ENCODE measurements at regions of chr1 and their contacts with region 1.

Region 1: DNA sequence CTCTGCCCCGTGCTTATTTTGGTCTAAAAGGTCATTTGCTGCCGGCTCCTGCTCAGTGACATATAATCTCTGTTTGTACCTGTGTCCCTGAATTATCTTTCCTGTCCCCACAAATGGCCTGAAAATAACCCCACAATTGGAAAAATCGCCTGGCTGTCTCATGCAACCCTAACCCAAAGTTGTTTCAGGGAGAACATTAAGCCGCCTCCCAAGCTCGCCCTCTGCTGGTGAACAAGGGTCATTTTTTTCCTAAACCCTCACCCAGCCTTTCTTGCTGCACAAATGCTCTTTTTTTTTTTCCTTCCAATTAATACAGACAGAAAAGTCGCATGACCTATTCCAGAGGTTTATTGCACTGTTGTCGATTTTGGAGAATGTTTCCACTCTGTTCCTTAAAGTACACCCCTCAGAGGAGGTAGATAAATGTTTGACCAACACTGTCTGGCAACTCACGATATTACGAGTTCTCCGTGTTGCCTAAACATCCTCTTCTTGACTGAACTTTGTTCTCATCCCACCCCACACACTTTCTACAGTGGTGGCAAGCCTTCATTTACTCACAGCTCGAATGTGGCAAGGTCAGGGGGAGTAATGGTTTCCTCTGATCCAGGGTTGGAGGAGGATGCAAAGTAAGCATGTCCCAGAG is 148.7 kb downstream of the ZZZ3 start:
- DNase-seq: peak; percentile 68
- ATAC-seq: peak; percentile 56

Region 2: DNA sequence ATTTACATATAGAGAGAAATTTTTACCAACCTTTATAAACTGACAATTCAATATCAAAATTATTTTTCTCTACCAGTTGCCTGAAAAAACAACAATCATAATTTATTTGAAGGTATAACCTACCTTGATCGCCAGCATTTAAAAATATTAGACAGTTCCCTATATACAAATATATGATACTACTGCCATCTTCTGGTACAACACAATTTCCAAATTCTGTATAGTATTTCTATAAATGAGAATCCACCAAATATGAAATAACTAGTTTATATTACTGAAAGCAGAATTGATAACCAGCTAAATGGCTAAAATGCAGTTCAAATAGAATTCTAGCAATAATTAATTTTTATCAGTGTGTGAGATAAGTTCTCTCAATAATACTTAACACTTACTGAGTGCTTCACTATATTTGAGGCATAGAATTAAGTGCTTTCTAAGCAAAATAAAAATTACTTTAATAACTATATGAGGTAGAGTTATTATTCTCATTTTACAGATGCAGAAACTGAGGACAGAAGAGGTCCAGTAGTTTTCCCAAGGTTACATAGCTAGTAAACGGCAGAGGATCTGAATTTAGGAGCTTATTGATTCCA is 390.2 kb before region 1 on chr1:
- intact Hi-C with region 1: loop called (anchors 2 kb)
- DNase-seq: no peak
- ATAC-seq: no peak

Region 3: DNA sequence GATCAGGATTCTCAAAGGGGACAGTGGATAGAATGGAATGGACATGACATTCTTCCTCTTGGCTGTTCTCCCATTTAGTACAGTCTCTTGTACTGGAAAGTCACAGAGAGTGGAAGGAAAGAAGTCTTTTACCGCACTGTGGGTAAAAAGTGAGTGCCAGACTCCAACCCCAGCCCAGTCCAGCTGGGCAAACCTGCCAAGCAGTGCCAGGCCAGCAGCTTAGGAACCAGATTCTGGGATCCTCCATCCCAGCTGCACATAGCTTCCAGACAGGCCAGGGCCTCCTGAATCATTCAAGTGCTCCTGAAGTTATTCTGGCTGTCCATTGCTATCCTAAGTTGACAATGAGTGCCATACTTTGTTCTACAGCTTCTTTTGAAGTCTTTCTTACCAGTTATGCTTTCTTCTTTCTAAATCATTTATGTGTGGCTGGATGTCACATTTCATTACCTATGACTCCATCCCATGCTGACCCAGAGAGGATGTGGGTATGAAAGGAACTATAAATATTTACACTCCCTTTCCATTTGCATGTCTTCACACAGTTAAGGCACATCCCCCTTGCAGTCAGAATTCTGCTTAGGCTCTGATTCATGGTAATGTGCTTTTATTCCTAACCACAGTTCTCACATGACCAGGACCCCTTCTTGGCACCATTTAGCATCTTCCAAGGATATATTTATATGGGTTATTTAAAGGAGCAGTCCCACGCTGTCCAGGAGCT is 163.0 kb before region 1 on chr1:
- intact Hi-C with region 1: no loop called
- DNase-seq: no peak
- ATAC-seq: no peak

Region 4: GRCh38 chr1:77594366-77595112 is 60.8 kb after region 1 on chr1:
- intact Hi-C with region 1: no loop called
- DNase-seq: no peak
- ATAC-seq: no peak